Dorsolateral prefrontal cortex (tissue), 120 donors: ENCODE measurements at regions of chr16 and their contacts with region 1.

Region 1: DNA sequence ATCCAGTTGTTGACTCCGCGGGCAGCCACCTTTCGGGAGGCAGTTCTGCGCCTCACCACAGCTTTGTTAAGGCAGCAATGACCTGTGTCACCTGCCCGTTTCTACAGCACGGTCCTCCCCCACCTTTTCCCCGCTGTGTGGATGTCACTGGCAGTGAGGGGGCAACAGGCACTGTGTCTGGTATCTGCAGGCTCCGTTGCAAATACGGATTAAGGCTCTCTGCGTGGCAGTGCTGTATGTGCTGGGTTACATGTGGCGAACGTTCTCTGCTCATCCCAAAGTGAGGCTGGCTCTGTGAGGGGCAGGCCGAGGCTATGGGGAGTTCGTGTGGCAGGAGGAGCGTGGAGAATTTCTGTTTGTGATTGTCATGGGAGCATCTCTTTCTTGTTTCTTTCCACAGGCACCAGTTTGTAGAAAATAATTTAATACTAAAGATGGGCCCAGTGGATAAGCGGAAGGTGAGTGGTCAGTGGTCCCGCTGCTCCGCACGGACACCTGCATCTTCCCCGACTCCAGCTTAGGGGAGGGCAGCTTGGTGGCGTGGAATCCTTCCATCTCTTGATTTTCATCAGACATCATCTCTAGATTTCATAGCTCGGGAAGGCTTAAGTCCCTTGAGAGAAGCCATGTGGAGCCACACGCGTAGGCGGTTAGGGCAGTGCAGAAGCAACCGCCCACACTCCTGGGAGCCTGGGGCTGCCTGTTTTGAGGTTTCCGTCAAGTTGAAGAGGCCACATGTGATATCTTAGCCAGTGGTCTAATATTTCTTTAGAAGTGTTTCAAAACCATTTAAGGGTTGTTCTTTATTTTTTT is 57.8 kb downstream of the PDPK1 start:
- DNase-seq: peak in 3 of 10 donors; percentile 24 to 35 (median 27)
- H3K4me3 ChIP-seq: no peak overlapping the region
- H3K27ac ChIP-seq: no peak overlapping the region
- H3K27me3 ChIP-seq: no peaks in the 10 kb centered on the region
- CTCF ChIP-seq: no peak

Region 2: GRCh38 chr16:2486645-2487516 is 108.7 kb before region 1 on chr16:
- intact Hi-C with region 1: no loop called
- DNase-seq: peak in 7 of 10 donors; percentile 57 to 76 (median 70)
- H3K4me3 ChIP-seq: peak overlapping the region in 24 of 59 donors; percentile 4 to 36 (median 18)
- H3K27ac ChIP-seq: peak overlapping the region in 56 of 59 donors; percentile 25 to 90 (median 74)
- H3K27me3 ChIP-seq: no peaks in the 10 kb centered on the region
- CTCF ChIP-seq: peak in 50 of 56 donors; percentile 17 to 69 (median 44)

Region 3: DNA sequence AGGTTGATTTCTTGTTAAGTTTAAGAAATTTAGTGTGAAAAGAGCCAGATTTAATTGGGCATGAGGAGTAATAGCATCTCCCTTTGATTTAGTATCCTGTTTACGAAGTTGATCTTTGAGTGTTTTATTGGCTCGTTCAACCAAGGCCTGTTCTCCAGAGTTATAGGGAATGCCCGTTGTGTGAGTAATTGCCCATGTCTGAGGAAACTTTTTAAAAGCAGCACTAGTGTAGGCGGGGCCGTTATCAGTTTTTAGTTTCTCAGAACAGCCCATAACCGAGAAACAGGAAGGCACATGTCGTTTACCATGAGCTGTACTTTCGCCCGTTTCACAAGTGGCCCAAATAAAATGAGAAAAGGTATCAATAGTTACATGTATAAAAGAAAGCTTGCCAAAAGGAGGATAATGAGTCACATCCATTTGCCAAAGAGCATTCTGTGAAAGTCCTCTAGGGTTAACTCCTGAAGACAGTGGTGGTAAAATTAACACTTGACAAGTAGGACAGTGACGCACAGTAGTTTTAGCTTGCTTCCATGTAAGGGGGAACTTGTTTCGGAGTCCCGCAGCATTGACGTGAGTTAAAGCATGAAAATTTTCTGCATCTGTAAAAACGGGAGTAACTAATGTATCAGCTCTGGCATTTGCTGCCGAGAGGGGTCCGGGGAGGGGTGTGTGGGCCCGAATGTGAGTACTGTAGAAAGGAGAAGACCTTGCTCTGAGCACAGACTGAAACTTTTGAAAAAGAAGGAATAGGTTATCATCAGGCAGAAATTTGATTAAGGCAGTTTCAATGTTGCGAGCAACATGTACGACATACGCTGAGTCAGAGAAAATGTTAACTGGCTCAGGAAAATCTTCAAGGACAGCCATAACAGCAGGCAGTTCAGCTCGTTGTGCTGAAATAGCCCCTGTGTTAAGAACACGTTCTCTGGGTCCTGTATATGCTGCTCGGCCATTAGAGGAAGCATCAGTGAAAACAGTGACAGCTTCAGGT is 68.3 kb after region 1 on chr16:
- intact Hi-C with region 1: loop called in 1 of 2 experiments (anchors 10 kb)
- DNase-seq: no peak
- H3K4me3 ChIP-seq: no peak overlapping the region
- H3K27ac ChIP-seq: no peak overlapping the region
- H3K27me3 ChIP-seq: no peaks in the 10 kb centered on the region
- CTCF ChIP-seq: no peak